ENCODE measurements at regions of chr17 and their contacts with region 1.

Region 1: DNA sequence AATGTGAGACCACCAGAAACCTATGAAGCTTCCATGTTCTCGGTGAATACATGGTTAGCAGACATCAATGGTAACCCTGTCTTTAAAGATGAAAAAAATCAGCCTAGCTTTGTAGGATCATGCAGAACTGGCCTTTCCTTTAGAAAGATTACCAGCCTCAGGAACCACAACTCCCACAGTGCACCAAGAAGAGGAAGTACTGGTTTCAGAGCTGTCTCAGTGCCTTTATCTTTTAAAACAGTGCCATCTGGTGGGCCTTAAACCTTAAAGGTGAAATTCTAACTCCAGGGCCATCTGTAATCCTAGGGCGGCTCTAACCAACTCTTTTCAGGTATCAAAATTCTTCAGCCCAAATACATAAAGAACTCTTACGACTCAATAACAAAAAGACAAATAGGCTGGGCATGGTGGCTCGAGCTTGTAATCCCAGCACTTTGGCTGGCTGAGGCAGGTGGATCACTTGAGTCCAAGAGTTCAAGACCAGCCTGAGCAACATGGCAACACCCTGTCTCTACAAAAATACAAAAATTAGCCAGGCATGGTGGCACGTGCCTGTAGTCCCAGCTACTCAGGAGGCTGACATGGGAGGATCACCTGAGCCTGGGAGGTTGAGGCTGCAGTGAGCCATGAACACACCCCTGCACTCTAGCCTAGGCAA is 5.4 kb downstream of the ATPAF2 start:
- DNase-seq: peak; percentile 21 to 68 (median 63)
- H3K4me3 ChIP-seq: no peak overlapping the region
- H3K4me3 Mint-ChIP-seq: peak overlapping the region in 1 of 7 donors; percentile 66
- H3K27ac ChIP-seq: no peak overlapping the region
- H3K27ac Mint-ChIP-seq: peak overlapping the region in 6 of 8 donors; percentile 67 to 91 (median 80)
- H3K4me1 ChIP-seq: peaks cover 18% of the 10 kb centered on the region
- H3K4me1 Mint-ChIP-seq: peaks cover 21 to 35% (median 30%) of the 10 kb centered on the region in 3 donors
- H3K27me3 ChIP-seq: no peaks in the 10 kb centered on the region
- H3K27me3 Mint-ChIP-seq: peaks cover 0 to 1% of the 10 kb centered on the region in 2 donors

Region 2: GRCh38 chr17:17681187-17681848 is 352.3 kb before region 1 on chr17 and contains the start of gene RAI1:
- CTCF ChIA-PET with region 1: interaction called, 14 read pairs
- POLR2A ChIA-PET with region 1: interaction called, 7 read pairs
- DNase-seq: peak; percentile 63 to 80 (median 76)
- H3K4me3 ChIP-seq: peak within 1 kb of the TSS; percentile 66
- H3K4me3 Mint-ChIP-seq: peak within 1 kb of the TSS; percentile 84 to 98 (median 89)
- H3K27ac ChIP-seq: peak within 1 kb of the TSS; percentile 67
- H3K27ac Mint-ChIP-seq: peak within 1 kb of the TSS; percentile 80 to 97 (median 86)
- H3K4me1 ChIP-seq: peaks cover 30% of the 10 kb centered on the region
- H3K4me1 Mint-ChIP-seq: peaks cover 23 to 41% (median 35%) of the 10 kb centered on the region in 3 donors
- H3K27me3 ChIP-seq: no peaks in the 10 kb centered on the region
- H3K27me3 Mint-ChIP-seq: peaks cover 0 to 2% of the 10 kb centered on the region in 2 donors
- total RNA-seq, gene RAI1: 19.7 to 20.2 TPM

Region 3: DNA sequence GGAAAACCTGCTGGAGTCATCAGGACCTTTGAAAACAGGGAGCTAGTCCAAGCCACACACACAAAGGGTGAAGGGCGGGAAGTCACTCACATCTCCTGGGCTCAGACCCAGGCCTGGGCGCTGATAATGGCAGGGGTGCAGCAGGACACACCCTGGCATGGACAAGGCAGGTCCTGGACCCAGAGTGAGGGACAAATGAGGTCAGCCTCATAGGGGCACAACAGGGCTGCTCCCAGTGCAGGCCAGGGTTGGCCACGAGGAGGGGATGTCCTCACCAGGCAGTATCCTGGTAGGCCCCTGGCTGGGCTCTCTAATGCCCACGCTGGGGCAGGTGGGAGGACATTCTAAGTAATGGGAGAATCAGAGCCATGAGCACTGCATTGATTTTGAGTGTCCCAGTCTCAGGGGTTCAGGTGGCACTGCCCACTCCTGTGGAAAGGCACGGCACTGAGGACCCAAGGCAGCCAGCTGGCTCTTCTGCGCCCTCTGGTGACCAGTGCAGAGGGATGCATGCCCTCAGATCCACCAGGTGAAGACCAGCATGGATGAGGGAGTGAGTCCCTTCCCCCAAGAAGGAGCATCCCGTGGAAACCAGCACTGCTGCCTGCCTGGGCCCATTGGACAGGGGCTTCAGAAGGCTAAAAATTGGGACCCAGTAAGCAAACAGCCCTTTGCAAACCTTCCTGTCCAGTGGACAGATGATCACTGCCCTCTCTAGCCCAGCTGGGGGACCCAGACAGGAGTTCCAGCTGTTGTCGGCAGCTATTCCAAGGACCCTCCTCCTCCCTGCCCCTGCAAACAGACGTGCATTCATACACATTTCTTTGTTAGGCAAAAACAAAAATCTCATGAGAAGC is 173.4 kb before region 1 on chr17:
- CTCF ChIA-PET with region 1: interaction called, 16 read pairs
- POLR2A ChIA-PET with region 1: no interaction called
- DNase-seq: peak; percentile 60 to 79 (median 62)
- H3K4me3 ChIP-seq: no peak overlapping the region
- H3K4me3 Mint-ChIP-seq: no peak overlapping the region
- H3K27ac ChIP-seq: no peak overlapping the region
- H3K27ac Mint-ChIP-seq: no peak overlapping the region
- H3K4me1 ChIP-seq: peaks cover 37% of the 10 kb centered on the region
- H3K4me1 Mint-ChIP-seq: peaks cover 11 to 31% (median 29%) of the 10 kb centered on the region in 3 donors
- H3K27me3 ChIP-seq: no peaks in the 10 kb centered on the region
- H3K27me3 Mint-ChIP-seq: no peaks in the 10 kb centered on the region

Region 4: DNA sequence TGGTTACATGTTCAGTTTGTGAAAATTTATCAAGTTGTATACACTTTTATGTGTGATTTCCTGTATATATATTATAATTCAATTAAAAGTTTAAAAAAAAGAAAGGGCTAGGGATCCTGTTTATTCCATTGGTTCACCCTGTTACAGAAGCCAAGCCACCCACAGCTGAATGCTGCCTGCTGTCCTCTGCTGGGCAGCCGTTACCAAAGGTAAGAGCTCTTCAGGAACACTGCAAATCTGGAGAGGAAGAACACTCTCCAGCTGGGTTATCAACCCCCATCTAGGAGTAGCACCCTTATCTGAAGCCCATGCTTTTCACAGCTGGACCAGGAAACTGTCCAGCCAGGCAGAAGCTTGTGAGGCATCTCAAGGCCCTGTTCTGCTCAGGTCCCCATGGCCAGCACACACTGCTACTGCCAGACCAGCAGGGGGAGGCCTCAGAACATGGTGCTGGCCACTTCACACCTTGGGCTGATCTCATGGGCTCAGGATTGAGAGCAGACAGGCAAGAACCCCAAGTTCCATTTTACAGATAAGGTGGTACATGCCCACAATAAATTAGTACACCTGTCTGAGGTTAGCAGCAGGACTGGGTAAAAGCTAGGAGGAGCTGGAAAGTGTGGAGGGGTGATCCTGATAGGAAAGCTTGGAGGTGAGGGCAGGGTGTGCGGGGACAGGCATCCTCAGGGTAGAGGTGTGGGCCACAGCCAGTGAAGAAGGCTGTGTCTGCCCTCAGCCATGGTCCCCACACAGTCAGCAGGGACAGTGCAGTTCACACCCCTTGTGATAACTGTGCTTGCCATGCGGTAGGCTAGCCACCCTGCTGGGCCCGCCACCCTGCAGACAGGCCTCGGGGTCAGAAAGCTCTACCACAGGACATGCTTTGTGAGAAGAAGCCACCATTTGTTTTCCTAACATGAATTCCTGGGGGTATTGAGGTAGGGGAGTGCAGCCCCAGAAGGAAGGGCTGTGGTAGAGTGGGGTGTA is 142.5 kb before region 1 on chr17:
- CTCF ChIA-PET with region 1: interaction called, 18 read pairs
- POLR2A ChIA-PET with region 1: interaction called, 5 read pairs
- DNase-seq: peak; percentile 9 to 53 (median 14)
- H3K4me3 ChIP-seq: no peak overlapping the region
- H3K4me3 Mint-ChIP-seq: no peak overlapping the region
- H3K27ac ChIP-seq: no peak overlapping the region
- H3K27ac Mint-ChIP-seq: peak overlapping the region in 1 of 8 donors; percentile 27
- H3K4me1 ChIP-seq: no peaks in the 10 kb centered on the region
- H3K4me1 Mint-ChIP-seq: no peaks in the 10 kb centered on the region
- H3K27me3 ChIP-seq: no peaks in the 10 kb centered on the region
- H3K27me3 Mint-ChIP-seq: peaks cover 0 to 2% of the 10 kb centered on the region in 2 donors

Region 5: DNA sequence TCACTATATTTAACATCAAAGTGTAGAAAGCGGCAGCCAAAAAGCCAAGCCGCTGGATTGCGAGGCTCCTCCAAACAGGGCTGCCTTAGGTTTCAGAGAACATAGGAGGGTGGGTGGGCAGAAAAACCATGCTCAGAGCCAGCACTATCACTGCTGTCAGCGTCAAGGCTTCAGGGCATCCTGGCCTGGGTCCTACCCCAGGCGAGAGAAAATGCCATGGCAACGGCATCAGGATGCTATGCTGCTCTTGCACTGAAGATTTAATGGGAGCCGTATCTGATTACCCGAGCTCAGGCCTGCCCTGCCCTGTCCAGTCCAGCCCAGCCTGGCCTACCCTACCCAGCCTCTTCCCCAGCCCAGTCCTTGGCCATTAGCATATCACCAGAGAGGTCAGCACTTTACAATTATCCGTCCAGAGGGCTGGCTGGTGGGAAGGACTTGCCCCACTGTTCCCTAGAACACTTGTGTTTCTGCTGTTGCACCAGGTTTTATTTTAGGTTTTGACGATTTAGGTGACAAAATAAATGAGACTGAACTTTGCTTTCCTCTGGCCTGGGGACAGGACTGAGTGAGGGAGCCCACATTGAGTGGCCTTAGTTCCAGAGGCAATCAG is 122.5 kb before region 1 on chr17:
- CTCF ChIA-PET with region 1: no interaction called
- POLR2A ChIA-PET with region 1: no interaction called
- DNase-seq: no peak
- H3K4me3 ChIP-seq: no peak overlapping the region
- H3K4me3 Mint-ChIP-seq: no peak overlapping the region
- H3K27ac ChIP-seq: no peak overlapping the region
- H3K27ac Mint-ChIP-seq: peak overlapping the region in 2 of 8 donors; percentile 36 to 50
- H3K4me1 ChIP-seq: no peaks in the 10 kb centered on the region
- H3K4me1 Mint-ChIP-seq: peaks cover 10 to 11% (median 11%) of the 10 kb centered on the region in 3 donors
- H3K27me3 ChIP-seq: no peaks in the 10 kb centered on the region
- H3K27me3 Mint-ChIP-seq: no peaks in the 10 kb centered on the region

Region 6: GRCh38 chr17:17993366-17993765 is 40.2 kb before region 1 on chr17:
- CTCF ChIA-PET with region 1: no interaction called
- POLR2A ChIA-PET with region 1: interaction called, 13 read pairs
- DNase-seq: no peak
- H3K4me3 ChIP-seq: no peak overlapping the region
- H3K4me3 Mint-ChIP-seq: no peak overlapping the region
- H3K27ac ChIP-seq: no peak overlapping the region
- H3K27ac Mint-ChIP-seq: peak overlapping the region in 1 of 8 donors; percentile 33
- H3K4me1 ChIP-seq: no peaks in the 10 kb centered on the region
- H3K4me1 Mint-ChIP-seq: no peaks in the 10 kb centered on the region
- H3K27me3 ChIP-seq: no peaks in the 10 kb centered on the region
- H3K27me3 Mint-ChIP-seq: no peaks in the 10 kb centered on the region